Heart left ventricle (tissue), 16 donors: ENCODE measurements at regions of chr22 and their contacts with region 1.

Region 1: DNA sequence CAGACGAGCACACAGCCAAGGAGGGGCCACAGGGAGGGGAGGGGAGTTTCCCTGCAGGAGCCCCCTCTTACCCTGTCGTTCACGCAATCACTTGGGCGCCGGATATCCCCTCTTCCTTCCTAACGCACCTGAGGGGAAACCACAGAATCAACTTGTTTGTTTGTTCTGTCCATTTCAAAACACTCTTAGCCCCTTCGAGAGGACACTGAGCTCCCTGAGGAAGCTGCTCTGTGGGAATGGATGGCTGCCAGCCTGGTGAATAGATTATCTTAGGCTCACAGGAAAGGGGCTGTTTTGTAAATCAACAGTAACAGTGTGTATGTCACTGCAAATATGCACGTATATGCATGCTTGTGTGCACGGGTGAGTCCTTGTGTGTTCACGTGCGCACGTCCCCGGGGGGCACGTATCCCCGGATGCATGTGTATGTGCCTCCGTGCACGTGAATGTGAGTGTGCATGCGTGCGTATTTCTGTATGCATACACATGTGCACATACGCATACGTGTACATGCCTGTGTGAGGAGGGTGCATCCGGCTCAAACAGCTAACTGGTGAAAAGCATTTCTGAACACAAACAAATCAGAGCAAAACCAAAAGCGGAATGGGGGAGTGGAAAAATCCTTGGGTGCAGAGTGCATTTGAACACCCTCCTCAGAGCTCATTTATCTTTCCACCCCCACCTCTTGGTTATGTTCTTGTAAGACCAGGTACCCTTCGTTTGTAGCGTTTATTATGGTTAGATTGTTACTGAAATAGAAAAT is 7.2 kb downstream of the ARSA start:
- DNase-seq: peak in 4 of 5 donors; percentile 76 to 87 (median 82)
- ATAC-seq: peak; percentile 74 to 91 (median 80)
- H3K4me3 ChIP-seq: peak overlapping the region in 9 of 12 donors; percentile 34 to 50 (median 43)
- H3K27ac ChIP-seq: peak overlapping the region in 8 of 12 donors; percentile 22 to 87 (median 52)
- H3K4me1 ChIP-seq: peaks cover 0 to 36% (median 21%) of the 10 kb centered on the region in 12 donors
- H3K27me3 ChIP-seq: no peaks in the 10 kb centered on the region
- CTCF ChIP-seq: peak in 5 of 12 donors; percentile 0 to 83 (median 63)
- POLR2A ChIP-seq: no peak

Region 2: GRCh38 chr22:50544078-50544745 is 76.6 kb before region 1 on chr22:
- intact Hi-C with region 1: loop called in 2 of 10 experiments (anchors 5 to 10 kb)
- DNase-seq: peak; percentile 79 to 93 (median 84)
- ATAC-seq: peak in 3 of 4 donors; percentile 58 to 64 (median 62)
- H3K4me3 ChIP-seq: peak overlapping the region in 10 of 12 donors; percentile 26 to 54 (median 40)
- H3K27ac ChIP-seq: peak overlapping the region in 4 of 12 donors; percentile 1 to 98 (median 36)
- H3K4me1 ChIP-seq: peaks cover 0 to 88% (median 24%) of the 10 kb centered on the region in 12 donors
- H3K27me3 ChIP-seq: peaks cover 20 to 55% (median 25%) of the 10 kb centered on the region in 9 donors
- CTCF ChIP-seq: peak; percentile 30 to 76 (median 60)
- POLR2A ChIP-seq: no peak

Region 3: GRCh38 chr22:50576070-50576469 is 44.7 kb before region 1 on chr22:
- intact Hi-C with region 1: loop called in 2 of 10 experiments (anchors 5 kb)
- DNase-seq: no peak
- ATAC-seq: peak in 2 of 4 donors; percentile 3 to 44
- H3K4me3 ChIP-seq: peak overlapping the region in 3 of 12 donors; percentile 58 to 73 (median 67)
- H3K27ac ChIP-seq: peak overlapping the region in 5 of 12 donors; percentile 31 to 99 (median 95)
- H3K4me1 ChIP-seq: peaks cover 0 to 78% (median 19%) of the 10 kb centered on the region in 12 donors
- H3K27me3 ChIP-seq: no peaks in the 10 kb centered on the region
- CTCF ChIP-seq: peak in 10 of 12 donors; percentile 14 to 55 (median 36)
- POLR2A ChIP-seq: no peak